Activated CD4-positive, alpha-beta T cell treated with anti-CD3 and anti-CD28 coated beads, Interleukin-2, amount 10 ng/mL, durations not matched to agents 24 days and 14 days (primary cell): ENCODE measurements at regions of chr16 and their contacts with region 1.

Region 1: GRCh38 chr16:80197741-80198201 is 343.0 kb upstream of the DYNLRB2 start:
- DNase-seq: no peak
- H3K4me3 Mint-ChIP-seq: no peak overlapping the region
- H3K27ac Mint-ChIP-seq: peak overlapping the region; percentile 70
- H3K4me1 Mint-ChIP-seq: peaks cover 2% of the 10 kb centered on the region
- H3K27me3 Mint-ChIP-seq: no peaks in the 10 kb centered on the region

Region 2: GRCh38 chr16:80231888-80232287 is 34.1 kb after region 1 on chr16:
- intact Hi-C with region 1: loop called (anchors 5 kb)
- DNase-seq: peak; percentile 58
- H3K4me3 Mint-ChIP-seq: no peak overlapping the region
- H3K27ac Mint-ChIP-seq: peak overlapping the region; percentile 40
- H3K4me1 Mint-ChIP-seq: peaks cover 7% of the 10 kb centered on the region
- H3K27me3 Mint-ChIP-seq: no peaks in the 10 kb centered on the region

Region 3: GRCh38 chr16:80489173-80489572 is 291.4 kb after region 1 on chr16:
- intact Hi-C with region 1: no loop called
- DNase-seq: no peak
- H3K4me3 Mint-ChIP-seq: no peak overlapping the region
- H3K27ac Mint-ChIP-seq: no peak overlapping the region
- H3K4me1 Mint-ChIP-seq: no peaks in the 10 kb centered on the region
- H3K27me3 Mint-ChIP-seq: peaks cover 10% of the 10 kb centered on the region